ENCODE measurements at regions of chr19 and their contacts with region 1.

Region 1: GRCh38 chr19:46265217-46265828 is 31.5 kb upstream of the HIF3A start:
- DNase-seq: no peak
- H3K4me3 ChIP-seq: no peak overlapping the region
- H3K27ac ChIP-seq: no peak overlapping the region
- H3K4me1 ChIP-seq: peaks cover 0 to 12% (median 0%) of the 10 kb centered on the region in 3 donors
- H3K27me3 ChIP-seq: peaks cover 0 to 58% (median 0%) of the 10 kb centered on the region in 4 donors
- CTCF ChIP-seq: peak; percentile 64 to 96 (median 92)
- POLR2A ChIP-seq: no peak

Region 2: GRCh38 chr19:46021531-46022041 is 243.7 kb before region 1 on chr19:
- intact Hi-C with region 1: loop called (anchors 10 kb)
- DNase-seq: no peak
- H3K4me3 ChIP-seq: no peak overlapping the region
- H3K27ac ChIP-seq: no peak overlapping the region
- H3K4me1 ChIP-seq: peaks cover 10 to 31% (median 10%) of the 10 kb centered on the region in 3 donors
- H3K27me3 ChIP-seq: peaks cover 0 to 44% (median 2%) of the 10 kb centered on the region in 4 donors
- CTCF ChIP-seq: peak in 5 of 6 experiments; percentile 17 to 55 (median 40)
- POLR2A ChIP-seq: no peak

Region 3: GRCh38 chr19:46076951-46077816 is 188.1 kb before region 1 on chr19:
- intact Hi-C with region 1: loop called (anchors 5 kb)
- DNase-seq: no peak
- H3K4me3 ChIP-seq: peak overlapping the region in 3 of 4 donors; percentile 34 to 55 (median 39)
- H3K27ac ChIP-seq: peak overlapping the region in 1 of 4 donors; percentile 18
- H3K4me1 ChIP-seq: peaks cover 6 to 16% (median 7%) of the 10 kb centered on the region in 3 donors
- H3K27me3 ChIP-seq: peaks cover 0 to 95% (median 10%) of the 10 kb centered on the region in 4 donors
- CTCF ChIP-seq: peak; percentile 61 to 95 (median 82)
- POLR2A ChIP-seq: no peak

Region 4: DNA sequence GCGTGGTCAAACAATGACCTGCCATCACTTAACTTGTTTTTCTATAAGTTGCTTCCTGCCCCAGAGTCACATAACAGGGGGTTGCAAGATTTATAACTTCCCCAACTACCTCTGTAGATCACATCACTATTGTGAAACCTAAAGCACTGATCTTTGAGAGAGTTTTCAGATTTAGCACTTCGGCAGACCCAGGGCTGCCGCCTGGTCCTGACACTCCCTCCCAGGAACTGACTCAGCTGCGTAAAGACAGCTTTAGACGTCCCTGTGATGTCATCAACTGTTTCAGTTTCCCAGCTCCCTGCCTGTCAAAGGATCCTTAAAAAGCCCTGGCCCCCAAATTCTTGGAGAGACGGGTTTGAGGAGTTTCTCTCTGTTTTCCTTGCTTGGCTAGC is 83.9 kb before region 1 on chr19:
- intact Hi-C with region 1: loop called (anchors 10 kb)
- DNase-seq: no peak
- H3K4me3 ChIP-seq: no peak overlapping the region
- H3K27ac ChIP-seq: no peak overlapping the region
- H3K4me1 ChIP-seq: peaks cover 0 to 5% (median 0%) of the 10 kb centered on the region in 3 donors
- H3K27me3 ChIP-seq: peaks cover 0 to 7% (median 0%) of the 10 kb centered on the region in 4 donors
- CTCF ChIP-seq: no peak
- POLR2A ChIP-seq: no peak

Region 5: GRCh38 chr19:46299004-46299509 is 33.7 kb after region 1 on chr19:
- intact Hi-C with region 1: no loop called
- DNase-seq: no peak
- H3K4me3 ChIP-seq: peak overlapping the region; percentile 26 to 65 (median 52)
- H3K27ac ChIP-seq: peak overlapping the region; percentile 79 to 96 (median 92)
- H3K4me1 ChIP-seq: peaks cover 43 to 84% (median 54%) of the 10 kb centered on the region in 3 donors
- H3K27me3 ChIP-seq: peaks cover 0 to 21% (median 0%) of the 10 kb centered on the region in 4 donors
- CTCF ChIP-seq: no peak
- POLR2A ChIP-seq: peak in 1 of 4 donors; percentile 19

Region 6: GRCh38 chr19:46442808-46443450 is 177.6 kb after region 1 on chr19:
- intact Hi-C with region 1: no loop called
- DNase-seq: no peak
- H3K4me3 ChIP-seq: no peak overlapping the region
- H3K27ac ChIP-seq: no peak overlapping the region
- H3K4me1 ChIP-seq: peaks cover 0 to 8% (median 0%) of the 10 kb centered on the region in 3 donors
- H3K27me3 ChIP-seq: peaks cover 0 to 19% (median 0%) of the 10 kb centered on the region in 4 donors
- CTCF ChIP-seq: no peak
- POLR2A ChIP-seq: no peak